Activated CD4-positive, alpha-beta T cell treated with anti-CD3 and anti-CD28 coated beads for 36 hours (primary cell): ENCODE measurements at regions of chr1 and their contacts with region 1.

Region 1: GRCh38 chr1:15617175-15617880 is at the start of gene DDI2:
- DNase-seq: peak; percentile 98
- ATAC-seq: peak; percentile 89
- H3K4me3 Mint-ChIP-seq: peak within 1 kb of the TSS; percentile 94
- H3K27ac Mint-ChIP-seq: peak within 1 kb of the TSS; percentile 95
- H3K4me1 Mint-ChIP-seq: peaks cover 45% of the 10 kb centered on the region
- H3K27me3 Mint-ChIP-seq: no peaks in the 10 kb centered on the region
- total RNA-seq, gene DDI2: 30.2 to 34.0 TPM

Region 2: GRCh38 chr1:15246960-15247614 is 370.2 kb before region 1 on chr1 and contains the start of gene FHAD1:
- CTCF ChIA-PET with region 1: no interaction called
- POLR2A ChIA-PET with region 1: no interaction called
- intact Hi-C with region 1: loop called in 1 of 2 experiments (anchors 5 kb)
- DNase-seq: peak; percentile 63
- ATAC-seq: no peak
- H3K4me3 Mint-ChIP-seq: peak within 1 kb of the TSS; percentile 40
- H3K27ac Mint-ChIP-seq: peak within 1 kb of the TSS; percentile 10
- H3K4me1 Mint-ChIP-seq: peaks cover 72% of the 10 kb centered on the region
- H3K27me3 Mint-ChIP-seq: peaks cover 47% of the 10 kb centered on the region
- total RNA-seq, gene FHAD1: 0.21 to 0.53 TPM

Region 3: GRCh38 chr1:15489052-15489736 is 128.1 kb before region 1 on chr1:
- CTCF ChIA-PET with region 1: no interaction called
- POLR2A ChIA-PET with region 1: no interaction called
- intact Hi-C with region 1: no loop called
- DNase-seq: no peak
- ATAC-seq: no peak
- H3K4me3 Mint-ChIP-seq: no peak overlapping the region
- H3K27ac Mint-ChIP-seq: no peak overlapping the region
- H3K4me1 Mint-ChIP-seq: no peaks in the 10 kb centered on the region
- H3K27me3 Mint-ChIP-seq: no peaks in the 10 kb centered on the region

Region 4: GRCh38 chr1:15508700-15509487 is 108.4 kb before region 1 on chr1:
- CTCF ChIA-PET with region 1: no interaction called
- POLR2A ChIA-PET with region 1: no interaction called
- intact Hi-C with region 1: no loop called
- DNase-seq: no peak
- ATAC-seq: no peak
- H3K4me3 Mint-ChIP-seq: no peak overlapping the region
- H3K27ac Mint-ChIP-seq: no peak overlapping the region
- H3K4me1 Mint-ChIP-seq: peaks cover 2% of the 10 kb centered on the region
- H3K27me3 Mint-ChIP-seq: no peaks in the 10 kb centered on the region

Region 5: DNA sequence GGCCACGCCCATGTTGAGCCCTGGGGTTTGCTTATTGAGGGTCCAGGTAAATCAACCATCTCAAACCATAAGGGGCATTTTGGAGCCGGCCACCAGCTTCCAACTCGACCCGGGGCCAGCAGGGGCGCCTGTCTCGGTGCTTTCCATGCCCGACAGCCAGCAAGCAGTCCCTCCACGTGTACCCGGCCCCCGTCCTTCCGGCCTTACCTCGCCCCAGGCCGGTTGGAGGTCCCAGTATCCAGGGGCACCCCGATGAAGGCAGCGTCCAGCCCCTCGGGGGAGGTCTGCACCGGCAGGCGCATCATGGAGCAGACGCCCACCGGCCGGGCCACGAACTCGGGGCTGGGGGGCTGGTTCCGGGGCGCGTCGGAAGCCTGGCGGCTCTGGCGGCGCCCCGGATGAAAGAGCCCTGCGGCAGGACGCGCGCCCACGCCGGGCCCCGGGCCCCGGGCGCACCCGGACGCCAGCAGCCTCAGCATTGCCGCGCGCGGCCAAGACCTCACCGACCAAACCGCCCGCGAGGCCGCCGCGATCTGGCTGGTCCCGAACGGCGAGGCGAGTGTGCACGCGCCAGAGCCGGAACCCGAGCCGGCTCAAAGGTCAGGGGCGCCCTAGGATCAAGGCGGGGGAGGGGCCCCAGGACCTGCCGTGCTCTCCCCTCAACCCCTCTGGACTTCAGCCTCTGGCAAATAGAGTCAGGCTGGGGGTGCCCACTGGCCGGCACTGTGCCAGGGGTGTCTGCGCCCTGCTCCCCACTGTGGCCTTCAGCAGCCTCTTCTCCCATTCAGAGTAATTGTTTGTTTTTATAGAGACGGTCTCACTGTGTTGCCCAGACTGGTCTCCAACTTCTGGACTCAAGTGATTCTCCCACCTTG is 32.6 kb before region 1 on chr1 and contains the start of gene AGMAT:
- CTCF ChIA-PET with region 1: interaction called, 7 read pairs
- POLR2A ChIA-PET with region 1: no interaction called
- intact Hi-C with region 1: loop called (anchors 1 to 5 kb)
- DNase-seq: peak; percentile 82
- ATAC-seq: peak; percentile 80
- H3K4me3 Mint-ChIP-seq: peak within 1 kb of the TSS; percentile 77
- H3K27ac Mint-ChIP-seq: peak within 1 kb of the TSS; percentile 89
- H3K4me1 Mint-ChIP-seq: peaks cover 20% of the 10 kb centered on the region
- H3K27me3 Mint-ChIP-seq: no peaks in the 10 kb centered on the region
- total RNA-seq, gene AGMAT: 18.1 to 24.0 TPM

Region 6: GRCh38 chr1:15684468-15685291 is 67.4 kb after region 1 on chr1:
- CTCF ChIA-PET with region 1: no interaction called
- POLR2A ChIA-PET with region 1: no interaction called
- intact Hi-C with region 1: loop called (anchors 1 to 2 kb)
- DNase-seq: peak; percentile 60
- ATAC-seq: peak; percentile 37
- H3K4me3 Mint-ChIP-seq: peak overlapping the region; percentile 86
- H3K27ac Mint-ChIP-seq: peak overlapping the region; percentile 92
- H3K4me1 Mint-ChIP-seq: peaks cover 53% of the 10 kb centered on the region
- H3K27me3 Mint-ChIP-seq: no peaks in the 10 kb centered on the region

Region 7: GRCh38 chr1:15949453-15950245 is 332.3 kb after region 1 on chr1:
- CTCF ChIA-PET with region 1: no interaction called
- POLR2A ChIA-PET with region 1: no interaction called
- intact Hi-C with region 1: loop called in 1 of 2 experiments (anchors 2 kb)
- DNase-seq: peak; percentile 94
- ATAC-seq: peak; percentile 75
- H3K4me3 Mint-ChIP-seq: peak overlapping the region; percentile 61
- H3K27ac Mint-ChIP-seq: peak overlapping the region; percentile 95
- H3K4me1 Mint-ChIP-seq: peaks cover 74% of the 10 kb centered on the region
- H3K27me3 Mint-ChIP-seq: no peaks in the 10 kb centered on the region

Region 8: GRCh38 chr1:16236511-16237342 is 619.4 kb after region 1 on chr1 and contains the start of gene CPLANE2:
- CTCF ChIA-PET with region 1: no interaction called
- POLR2A ChIA-PET with region 1: no interaction called
- intact Hi-C with region 1: loop called in 1 of 2 experiments (anchors 1 kb)
- DNase-seq: peak; percentile 98
- ATAC-seq: peak; percentile 85
- H3K4me3 Mint-ChIP-seq: peak within 1 kb of the TSS; percentile 81
- H3K27ac Mint-ChIP-seq: peak within 1 kb of the TSS; percentile 85
- H3K4me1 Mint-ChIP-seq: peaks cover 23% of the 10 kb centered on the region
- H3K27me3 Mint-ChIP-seq: no peaks in the 10 kb centered on the region
- total RNA-seq, gene CPLANE2: 2.4 to 3.7 TPM